H1 (cell line): ENCODE measurements at regions of chr7 and their contacts with region 1.

Region 1: GRCh38 chr7:1758028-1758858 is 88.2 kb downstream of the ELFN1 start:
- DNase-seq: no peak
- H3K4me3 ChIP-seq: no peak overlapping the region
- H3K27ac ChIP-seq: no peak overlapping the region
- H3K4me1 ChIP-seq: peaks cover 6 to 16% (median 8%) of the 10 kb centered on the region in 4 experiments; a peak in 6 of 7 replicates
- H3K27me3 ChIP-seq: peaks cover 0 to 10% (median 4%) of the 10 kb centered on the region in 4 experiments; a peak in 4 of 7 replicates
- CTCF ChIP-seq: peak; percentile 63 to 81 (median 70)
- EP300 ChIP-seq: no peak
- POLR2A ChIP-seq: no peak
- RAD21 ChIP-seq: peak; percentile 62 to 67

Region 2: DNA sequence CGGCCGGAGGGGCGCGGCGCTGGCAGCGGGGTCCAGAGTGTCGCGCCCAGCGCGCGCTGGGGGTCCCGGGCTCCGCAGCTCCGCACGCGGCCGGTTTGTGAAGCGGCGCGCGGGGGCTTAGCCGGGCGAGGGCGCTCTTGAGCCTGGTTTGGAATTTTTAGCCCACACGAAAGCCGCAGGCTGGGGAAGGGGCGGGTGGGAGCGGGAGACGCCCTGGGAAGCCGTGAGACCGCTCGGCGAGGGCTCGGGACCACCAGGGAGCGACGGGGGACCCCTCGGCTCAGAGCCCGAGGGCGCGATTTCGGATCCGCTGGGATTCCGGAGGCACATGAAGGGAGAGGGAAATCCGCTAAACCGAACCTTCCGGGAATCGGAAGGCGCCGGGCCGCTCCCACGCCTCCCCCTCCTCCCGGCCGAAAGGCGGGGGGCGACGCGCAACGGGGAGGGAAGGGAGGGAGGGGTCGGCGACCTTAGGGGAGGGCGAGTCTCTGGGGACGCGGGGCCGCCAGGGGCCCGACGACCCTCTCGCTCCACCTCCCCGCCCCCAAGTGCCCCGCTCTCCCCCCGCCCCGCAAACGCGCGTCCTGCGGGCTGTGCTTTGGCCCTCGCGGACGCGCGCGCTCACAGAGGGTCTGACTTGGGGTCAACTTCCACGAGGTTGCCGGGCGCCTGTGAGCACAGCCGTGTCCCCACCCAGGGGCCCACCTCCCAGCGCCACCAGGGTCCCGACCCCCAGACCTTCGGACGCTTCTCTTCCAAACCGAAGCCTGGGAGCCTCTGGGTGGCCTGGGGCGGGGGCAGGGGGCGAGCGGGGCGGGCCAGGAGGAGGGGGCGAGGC is 93.3 kb before region 1 on chr7:
- CTCF ChIA-PET with region 1: interaction called, 11 read pairs
- POLR2A ChIA-PET with region 1: interaction called, 3 read pairs
- DNase-seq: peak in 1 of 2 experiments; percentile 93
- H3K4me3 ChIP-seq: peak overlapping the region; percentile 26 to 77 (median 36)
- H3K27ac ChIP-seq: no peak overlapping the region
- H3K4me1 ChIP-seq: peaks cover 0 to 27% (median 15%) of the 10 kb centered on the region in 4 experiments; a peak in 5 of 7 replicates
- H3K27me3 ChIP-seq: peaks cover 57 to 76% (median 72%) of the 10 kb centered on the region in 4 experiments
- CTCF ChIP-seq: peak in 2 of 3 experiments; percentile 68 to 99; a peak in 3 of 4 replicates
- EP300 ChIP-seq: peak in 1 of 2 experiments; percentile 16; a peak in 1 of 3 replicates
- POLR2A ChIP-seq: no peak
- RAD21 ChIP-seq: peak; percentile 71 to 84

Region 3: GRCh38 chr7:1675671-1676549 is 82.3 kb before region 1 on chr7:
- CTCF ChIA-PET with region 1: interaction called, 12 read pairs
- POLR2A ChIA-PET with region 1: no interaction called
- DNase-seq: peak in 1 of 2 experiments; percentile 48
- H3K4me3 ChIP-seq: no peak overlapping the region
- H3K27ac ChIP-seq: no peak overlapping the region
- H3K4me1 ChIP-seq: peaks cover 0 to 6% (median 2%) of the 10 kb centered on the region in 4 experiments; a peak in 4 of 7 replicates
- H3K27me3 ChIP-seq: peaks cover 7 to 16% (median 14%) of the 10 kb centered on the region in 4 experiments
- CTCF ChIP-seq: no peak
- EP300 ChIP-seq: no peak
- POLR2A ChIP-seq: no peak
- RAD21 ChIP-seq: no peak